ENCODE measurements at regions of chr17 and their contacts with region 1.

Region 1: GRCh38 chr17:55717898-55718735 is 4.5 kb downstream of the TMEM100 start:
- DNase-seq: peak; percentile 69 to 79
- H3K4me3 ChIP-seq: no peak overlapping the region
- H3K4me3 Mint-ChIP-seq: no peak overlapping the region
- H3K27ac Mint-ChIP-seq: no peak overlapping the region
- H3K4me1 ChIP-seq: no peaks in the 10 kb centered on the region
- H3K4me1 Mint-ChIP-seq: no peaks in the 10 kb centered on the region
- H3K27me3 ChIP-seq: no peaks in the 10 kb centered on the region; the same call in 1 of the 2 replicates
- H3K27me3 Mint-ChIP-seq: peaks cover 20% of the 10 kb centered on the region
- CTCF ChIP-seq: peak; percentile 79 to 90

Region 2: DNA sequence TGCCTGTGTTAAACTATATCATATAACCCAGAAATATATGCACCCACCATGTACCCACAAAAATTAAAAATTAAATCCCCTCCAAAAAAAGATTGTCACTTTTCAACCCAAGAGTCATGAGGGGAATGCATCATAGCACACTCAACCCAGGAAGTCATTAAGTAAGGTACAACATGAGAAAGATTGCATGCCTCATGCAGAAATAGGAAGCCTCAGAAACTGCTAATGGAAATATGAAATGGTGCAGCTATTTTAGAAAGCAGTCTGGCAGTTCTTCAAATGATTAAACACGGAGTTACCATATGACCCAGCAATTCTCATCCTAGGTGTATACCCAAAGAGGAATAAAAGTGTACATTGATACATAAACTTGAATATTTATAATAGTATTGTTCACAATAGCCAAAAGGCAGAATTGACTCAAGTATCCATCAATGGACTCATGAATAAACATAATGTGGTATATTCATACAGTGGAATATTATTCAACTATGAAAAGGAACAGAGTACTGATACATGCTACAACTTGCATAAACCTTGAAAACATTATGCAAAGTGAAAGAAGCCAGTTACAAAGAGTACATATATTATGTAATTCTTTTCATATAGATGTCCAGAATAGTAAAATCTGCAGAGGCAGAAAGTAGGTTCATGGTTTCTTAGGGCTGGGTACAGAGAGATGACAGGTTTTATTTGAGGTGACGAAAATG is 65.8 kb before region 1 on chr17:
- CTCF ChIA-PET with region 1: no interaction called
- POLR2A ChIA-PET with region 1: no interaction called
- intact Hi-C with region 1: loop called (anchors 5 kb)
- DNase-seq: no peak
- H3K4me3 ChIP-seq: no peak overlapping the region
- H3K4me3 Mint-ChIP-seq: no peak overlapping the region
- H3K27ac Mint-ChIP-seq: no peak overlapping the region
- H3K4me1 ChIP-seq: no peaks in the 10 kb centered on the region
- H3K4me1 Mint-ChIP-seq: no peaks in the 10 kb centered on the region
- H3K27me3 ChIP-seq: no peaks in the 10 kb centered on the region
- H3K27me3 Mint-ChIP-seq: peaks cover 26% of the 10 kb centered on the region
- CTCF ChIP-seq: no peak